Endothelial cell of umbilical vein (primary cell): ENCODE measurements at regions of chr10 and their contacts with region 1.

Region 1: GRCh38 chr10:99630439-99630838 is 10.2 kb upstream of the SLC25A28 start:
- DNase-seq: peak; percentile 63
- H3K4me3 ChIP-seq: no peak overlapping the region
- H3K27ac ChIP-seq: no peak overlapping the region
- H3K4me1 ChIP-seq: no peaks in the 10 kb centered on the region
- H3K27me3 ChIP-seq: no peaks in the 10 kb centered on the region
- CTCF ChIP-seq: peak; percentile 19 to 42
- POLR2A ChIP-seq: no peak

Region 2: DNA sequence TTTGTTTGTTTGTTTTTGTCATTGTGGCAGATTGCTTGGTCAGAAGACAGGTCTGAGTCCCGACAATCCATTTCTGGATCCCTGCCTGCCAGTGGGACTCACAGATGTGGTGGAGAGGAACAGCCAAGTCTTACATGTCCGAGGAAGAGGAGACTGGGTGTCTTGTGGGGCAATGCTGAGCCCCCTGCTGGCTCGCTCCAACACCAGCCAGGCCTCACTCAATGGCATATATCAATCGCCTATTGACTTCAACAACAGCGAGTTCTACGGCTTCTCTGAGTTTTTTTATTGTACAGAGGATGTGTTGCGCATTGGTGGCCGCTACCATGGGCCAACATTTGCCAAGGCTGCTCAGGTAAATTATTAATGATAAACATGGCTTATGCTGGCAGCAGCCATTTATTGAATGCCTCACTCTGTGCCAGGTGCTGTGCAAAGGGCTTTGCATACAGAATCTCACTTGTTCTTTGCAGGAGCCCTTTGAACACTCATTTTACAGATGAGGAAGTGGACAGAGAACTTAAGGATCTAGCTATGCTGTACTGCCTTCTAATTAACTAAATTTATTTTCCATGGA is 68.2 kb after region 1 on chr10:
- CTCF ChIA-PET with region 1: no interaction called
- POLR2A ChIA-PET with region 1: no interaction called
- dilution Hi-C with region 1: no loop called
- intact Hi-C with region 1: loop called (anchors 1 kb)
- DNase-seq: peak; percentile 7
- H3K4me3 ChIP-seq: no peak overlapping the region
- H3K27ac ChIP-seq: no peak overlapping the region
- H3K4me1 ChIP-seq: no peaks in the 10 kb centered on the region
- H3K27me3 ChIP-seq: no peaks in the 10 kb centered on the region
- CTCF ChIP-seq: peak; percentile 11 to 27
- POLR2A ChIP-seq: no peak

Region 3: DNA sequence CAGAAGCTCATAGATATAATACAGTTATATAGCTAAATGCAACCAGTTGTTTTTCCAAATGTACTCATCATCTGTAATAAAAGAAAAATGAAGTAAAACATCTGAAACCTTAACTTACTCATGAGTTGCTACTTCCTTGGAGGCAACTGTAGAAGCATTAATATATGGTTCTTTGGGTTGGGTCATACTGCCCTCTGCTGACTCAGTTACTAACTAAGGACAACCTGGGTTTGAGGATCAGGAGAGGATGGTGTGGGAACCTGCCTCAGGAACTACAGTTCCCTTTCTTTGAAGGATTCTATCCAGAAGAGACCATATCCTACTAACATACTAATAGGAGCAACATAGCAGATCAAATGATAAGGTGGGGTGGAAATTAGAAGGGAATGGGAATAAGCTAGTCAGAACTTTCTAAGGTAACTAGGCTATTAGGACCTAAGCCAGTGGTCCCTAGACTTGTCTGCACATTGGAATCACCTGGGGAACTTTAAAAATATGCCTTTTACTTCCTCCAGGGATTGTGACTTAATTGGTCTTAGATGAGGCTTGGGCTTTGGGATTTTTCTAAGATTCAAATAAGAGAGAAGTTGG is 80.8 kb after region 1 on chr10:
- CTCF ChIA-PET with region 1: interaction called, 24 read pairs
- POLR2A ChIA-PET with region 1: no interaction called
- dilution Hi-C with region 1: no loop called
- intact Hi-C with region 1: loop called (anchors 1 kb)
- DNase-seq: peak; percentile 67
- H3K4me3 ChIP-seq: no peak overlapping the region
- H3K27ac ChIP-seq: no peak overlapping the region
- H3K4me1 ChIP-seq: no peaks in the 10 kb centered on the region
- H3K27me3 ChIP-seq: no peaks in the 10 kb centered on the region
- CTCF ChIP-seq: peak; percentile 36 to 46
- POLR2A ChIP-seq: no peak